ENCODE measurements at regions of chr20 and their contacts with region 1.

Region 1: GRCh38 chr20:17634661-17635331 is 47.2 kb downstream of the RRBP1 start:
- H3K4me3 Mint-ChIP-seq: peak overlapping the region; percentile 39
- H3K27ac Mint-ChIP-seq: peak overlapping the region; percentile 89
- H3K4me1 Mint-ChIP-seq: peaks cover 49% of the 10 kb centered on the region
- H3K27me3 Mint-ChIP-seq: no peaks in the 10 kb centered on the region

Region 2: GRCh38 chr20:17648791-17649730 is 14.3 kb after region 1 on chr20:
- intact Hi-C with region 1: loop called (anchors 2 kb)
- H3K4me3 Mint-ChIP-seq: peak overlapping the region; percentile 26
- H3K27ac Mint-ChIP-seq: peak overlapping the region; percentile 74
- H3K4me1 Mint-ChIP-seq: peaks cover 68% of the 10 kb centered on the region
- H3K27me3 Mint-ChIP-seq: no peaks in the 10 kb centered on the region

Region 3: GRCh38 chr20:17710379-17711266 is 75.8 kb after region 1 on chr20:
- intact Hi-C with region 1: no loop called
- H3K4me3 Mint-ChIP-seq: no peak overlapping the region
- H3K27ac Mint-ChIP-seq: no peak overlapping the region
- H3K4me1 Mint-ChIP-seq: no peaks in the 10 kb centered on the region
- H3K27me3 Mint-ChIP-seq: no peaks in the 10 kb centered on the region